Kidney (tissue), 22 donors: ENCODE measurements at regions of chr5 and their contacts with region 1.

Region 1: DNA sequence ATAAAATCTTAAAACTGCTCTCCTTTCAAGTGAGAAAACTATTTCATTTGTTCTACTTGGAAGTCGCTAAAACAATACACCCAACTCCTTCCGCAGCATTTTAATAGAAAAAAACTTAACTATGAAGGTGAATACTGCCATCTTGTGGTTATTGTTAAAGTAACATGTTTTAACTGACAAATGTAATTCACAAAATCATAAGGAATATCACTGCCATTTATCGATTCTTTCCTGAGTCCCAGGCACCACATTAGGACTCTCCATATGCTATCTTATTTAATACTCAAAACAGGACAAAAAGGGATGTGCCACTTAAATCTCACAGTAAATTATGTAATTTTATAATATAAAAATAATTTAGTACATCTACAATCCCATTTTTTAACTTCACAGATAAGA is 130.5 kb upstream of the ITGA1 start:
- DNase-seq: peak in 2 of 5 donors; percentile 50 to 68
- H3K4me3 ChIP-seq: peak overlapping the region in 1 of 3 donors; percentile 16
- H3K27ac ChIP-seq: no peak overlapping the region
- H3K4me1 ChIP-seq: no peaks in the 10 kb centered on the region
- H3K27me3 ChIP-seq: peaks cover 2% of the 10 kb centered on the region
- CTCF ChIP-seq: peak; percentile 43

Region 2: GRCh38 chr5:50962934-50963872 is 1694.0 kb before region 1 on chr5:
- intact Hi-C with region 1: loop called (anchors 10 kb)
- DNase-seq: peak in 4 of 5 donors; percentile 84 to 87 (median 86)
- H3K4me3 ChIP-seq: peak overlapping the region in 2 of 3 donors; percentile 33 to 54
- H3K27ac ChIP-seq: no peak overlapping the region
- H3K4me1 ChIP-seq: peaks cover 0 to 5% (median 0%) of the 10 kb centered on the region in 3 donors
- H3K27me3 ChIP-seq: peaks cover 48% of the 10 kb centered on the region
- CTCF ChIP-seq: peak; percentile 92